ENCODE measurements at regions of chr10 and their contacts with region 1.

Region 1: GRCh38 chr10:13074561-13075451 is 25.2 kb upstream of the OPTN start:
- DNase-seq: peak; percentile 58
- H3K4me3 ChIP-seq: no peak overlapping the region
- H3K27ac ChIP-seq: no peak overlapping the region
- H3K4me1 ChIP-seq: peaks cover 10% of the 10 kb centered on the region
- H3K27me3 ChIP-seq: no peaks in the 10 kb centered on the region
- CTCF ChIP-seq: peak; percentile 68 to 95

Region 2: DNA sequence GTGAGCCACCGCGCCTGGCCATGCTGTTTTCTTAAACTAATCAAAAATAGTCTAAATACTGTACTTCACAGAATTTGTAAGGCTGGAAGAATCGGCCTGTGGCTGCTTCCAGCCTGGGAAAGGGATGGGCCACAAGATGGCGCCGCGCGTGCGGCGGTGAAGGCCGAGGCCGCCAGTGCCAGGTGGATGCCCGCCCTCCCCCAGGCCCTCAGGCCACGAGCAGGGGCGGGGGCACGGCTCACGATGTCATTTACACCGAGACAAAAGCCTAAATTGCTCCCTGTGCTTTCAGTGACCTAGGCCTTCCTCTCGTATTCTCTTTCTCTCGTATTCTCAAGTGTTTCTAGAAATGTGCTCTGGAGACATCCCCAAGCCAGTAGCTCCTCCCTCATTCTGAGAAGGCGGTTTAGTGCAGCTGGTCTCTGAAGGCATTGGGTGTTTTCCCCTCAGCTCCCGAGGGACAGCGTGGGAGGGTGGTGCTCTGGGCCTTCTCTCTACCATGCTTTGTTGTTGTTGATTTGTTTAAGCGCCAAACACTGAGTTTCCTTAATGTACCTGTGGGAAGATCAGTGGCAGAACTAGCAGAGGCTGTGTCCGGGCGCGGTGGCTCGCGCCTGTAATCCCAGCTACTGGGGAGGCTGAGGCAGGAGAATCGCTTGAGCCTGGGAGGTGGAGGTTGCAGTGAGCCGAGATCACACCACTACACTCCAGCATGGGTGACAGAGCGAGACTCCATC is 810.4 kb before region 1 on chr10:
- CTCF ChIA-PET with region 1: no interaction called
- dilution Hi-C with region 1: no loop called
- in situ Hi-C with region 1: loop called (anchors 25 kb)
- intact Hi-C with region 1: loop called (anchors 1 kb)
- DNase-seq: peak; percentile 67
- H3K4me3 ChIP-seq: peak overlapping the region; percentile 15 to 39 (median 19)
- H3K27ac ChIP-seq: no peak overlapping the region
- H3K4me1 ChIP-seq: peaks cover 3% of the 10 kb centered on the region
- H3K27me3 ChIP-seq: no peaks in the 10 kb centered on the region
- CTCF ChIP-seq: peak; percentile 67 to 89

Region 3: DNA sequence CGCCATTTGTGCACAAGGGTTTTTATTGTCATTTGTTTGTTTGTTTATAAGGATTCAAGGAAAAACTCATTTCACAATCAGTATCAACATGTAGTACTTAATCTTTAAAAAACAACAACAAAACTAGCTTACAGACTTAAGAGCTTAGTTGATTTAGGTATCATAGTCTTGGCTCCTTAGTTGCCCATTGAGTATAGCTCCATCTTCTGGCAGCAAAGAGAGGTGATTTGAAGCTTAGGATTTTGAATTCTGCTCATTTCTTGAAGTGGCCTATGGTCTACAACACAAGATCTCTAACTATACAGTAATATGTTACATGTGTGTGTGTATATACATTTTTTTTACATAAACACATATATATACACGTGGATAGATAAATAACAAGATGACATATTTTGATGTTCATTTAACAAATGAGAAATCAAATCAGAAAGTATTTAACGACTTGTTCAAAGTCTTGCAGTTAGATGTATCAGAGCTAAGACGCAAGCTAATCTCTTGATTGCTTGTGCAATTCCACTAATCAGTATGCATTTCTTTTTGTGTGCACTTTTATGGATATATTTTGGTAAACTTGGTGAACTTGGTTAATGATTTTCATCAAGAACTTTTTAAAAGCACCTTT is 418.2 kb before region 1 on chr10:
- CTCF ChIA-PET with region 1: no interaction called
- dilution Hi-C with region 1: no loop called
- in situ Hi-C with region 1: no loop called
- intact Hi-C with region 1: loop called (anchors 10 kb)
- DNase-seq: peak; percentile 39
- H3K4me3 ChIP-seq: no peak overlapping the region
- H3K27ac ChIP-seq: no peak overlapping the region
- H3K4me1 ChIP-seq: no peaks in the 10 kb centered on the region
- H3K27me3 ChIP-seq: no peaks in the 10 kb centered on the region
- CTCF ChIP-seq: peak; percentile 69 to 81

Region 4: GRCh38 chr10:12720217-12720981 is 354.4 kb before region 1 on chr10:
- CTCF ChIA-PET with region 1: no interaction called
- dilution Hi-C with region 1: no loop called
- in situ Hi-C with region 1: loop called (anchors 10 to 25 kb)
- intact Hi-C with region 1: loop called (anchors 1 kb)
- DNase-seq: peak; percentile 97
- H3K4me3 ChIP-seq: no peak overlapping the region
- H3K27ac ChIP-seq: peak overlapping the region; percentile 36
- H3K4me1 ChIP-seq: peaks cover 40% of the 10 kb centered on the region
- H3K27me3 ChIP-seq: no peaks in the 10 kb centered on the region
- CTCF ChIP-seq: no peak

Region 5: GRCh38 chr10:12782537-12782936 is 292.3 kb before region 1 on chr10:
- CTCF ChIA-PET with region 1: no interaction called
- dilution Hi-C with region 1: no loop called
- in situ Hi-C with region 1: no loop called
- intact Hi-C with region 1: loop called (anchors 1 kb)
- DNase-seq: peak; percentile 6
- H3K4me3 ChIP-seq: no peak overlapping the region
- H3K27ac ChIP-seq: no peak overlapping the region
- H3K4me1 ChIP-seq: no peaks in the 10 kb centered on the region
- H3K27me3 ChIP-seq: no peaks in the 10 kb centered on the region
- CTCF ChIP-seq: peak; percentile 53 to 67

Region 6: GRCh38 chr10:12981570-12981969 is 93.2 kb before region 1 on chr10:
- CTCF ChIA-PET with region 1: no interaction called
- dilution Hi-C with region 1: no loop called
- in situ Hi-C with region 1: no loop called
- intact Hi-C with region 1: loop called (anchors 10 kb)
- DNase-seq: peak; percentile 67
- H3K4me3 ChIP-seq: no peak overlapping the region
- H3K27ac ChIP-seq: no peak overlapping the region
- H3K4me1 ChIP-seq: no peaks in the 10 kb centered on the region
- H3K27me3 ChIP-seq: no peaks in the 10 kb centered on the region
- CTCF ChIP-seq: no peak

Region 7: GRCh38 chr10:13115832-13116803 is 41.3 kb after region 1 on chr10:
- CTCF ChIA-PET with region 1: no interaction called
- dilution Hi-C with region 1: no loop called
- in situ Hi-C with region 1: no loop called
- intact Hi-C with region 1: no loop called
- DNase-seq: no peak
- H3K4me3 ChIP-seq: no peak overlapping the region
- H3K27ac ChIP-seq: no peak overlapping the region
- H3K4me1 ChIP-seq: no peaks in the 10 kb centered on the region
- H3K27me3 ChIP-seq: no peaks in the 10 kb centered on the region
- CTCF ChIP-seq: no peak